CD8-positive, alpha-beta T cell (primary cell): ENCODE measurements at regions of chr2 and their contacts with region 1.

Region 1: DNA sequence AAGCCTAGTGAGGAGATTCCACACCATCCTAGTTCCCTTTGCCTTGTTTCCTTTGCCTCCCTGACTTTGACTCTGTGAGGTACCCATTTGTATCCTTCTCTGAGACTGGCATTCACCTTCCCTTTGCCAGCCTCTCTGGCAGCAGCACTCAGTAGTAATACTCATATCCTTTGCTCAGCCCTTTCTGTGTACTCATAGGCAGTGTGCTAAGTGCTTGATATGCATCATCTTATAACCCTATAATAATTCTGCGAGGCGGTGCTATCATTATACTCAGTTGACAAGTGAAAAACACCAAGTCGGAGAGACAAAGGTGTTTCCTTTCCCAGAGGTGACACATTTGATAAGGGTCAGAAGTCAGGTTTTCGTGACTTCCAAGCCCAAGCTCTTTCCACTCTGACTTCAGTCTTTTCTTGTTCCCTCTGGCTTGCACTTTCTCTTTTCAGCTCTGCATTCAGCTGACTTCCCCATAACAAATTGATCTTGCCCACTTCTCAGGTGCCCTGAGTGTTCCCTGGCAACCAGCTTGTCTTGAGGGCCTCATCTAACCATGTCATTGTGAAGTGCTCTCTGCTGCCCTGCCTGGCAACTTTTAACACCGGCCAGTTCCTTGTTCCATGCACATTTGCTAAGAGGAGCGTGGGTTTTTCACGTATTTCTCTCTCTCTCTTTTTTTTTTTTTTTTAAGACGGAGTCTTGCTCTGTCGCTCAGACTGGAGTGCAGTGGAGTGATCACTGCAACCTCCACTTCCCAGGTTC is 94.5 kb upstream of the UPP2 start:
- DNase-seq: peak in 1 of 9 experiments; percentile 24
- ATAC-seq: peak; percentile 40
- H3K4me3 ChIP-seq: no peak overlapping the region
- H3K4me3 Mint-ChIP-seq: no peak overlapping the region
- H3K27ac ChIP-seq: no peak overlapping the region
- H3K27ac Mint-ChIP-seq: no peak overlapping the region
- H3K4me1 ChIP-seq: no peaks in the 10 kb centered on the region
- H3K4me1 Mint-ChIP-seq: peaks cover 4% of the 10 kb centered on the region
- H3K27me3 ChIP-seq: no peaks in the 10 kb centered on the region
- H3K27me3 Mint-ChIP-seq: peaks cover 11% of the 10 kb centered on the region
- CTCF ChIP-seq: no peak

Region 2: GRCh38 chr2:157497638-157498314 is 509.4 kb before region 1 on chr2:
- CTCF ChIA-PET with region 1: interaction called, 8 read pairs
- POLR2A ChIA-PET with region 1: no interaction called
- intact Hi-C with region 1: loop called (anchors 1 kb)
- DNase-seq: peak in 2 of 9 experiments; percentile 49 to 62
- ATAC-seq: peak; percentile 91
- H3K4me3 ChIP-seq: no peak overlapping the region
- H3K4me3 Mint-ChIP-seq: no peak overlapping the region
- H3K27ac ChIP-seq: no peak overlapping the region
- H3K27ac Mint-ChIP-seq: no peak overlapping the region
- H3K4me1 ChIP-seq: peaks cover 7% of the 10 kb centered on the region
- H3K4me1 Mint-ChIP-seq: peaks cover 33% of the 10 kb centered on the region
- H3K27me3 ChIP-seq: no peaks in the 10 kb centered on the region
- H3K27me3 Mint-ChIP-seq: no peaks in the 10 kb centered on the region
- CTCF ChIP-seq: peak; percentile 71

Region 3: GRCh38 chr2:157509744-157510143 is 497.4 kb before region 1 on chr2:
- CTCF ChIA-PET with region 1: interaction called, 14 read pairs
- POLR2A ChIA-PET with region 1: no interaction called
- intact Hi-C with region 1: no loop called
- DNase-seq: peak in 2 of 9 experiments; percentile 7 to 13
- ATAC-seq: no peak
- H3K4me3 ChIP-seq: no peak overlapping the region
- H3K4me3 Mint-ChIP-seq: no peak overlapping the region
- H3K27ac ChIP-seq: no peak overlapping the region
- H3K27ac Mint-ChIP-seq: no peak overlapping the region
- H3K4me1 ChIP-seq: no peaks in the 10 kb centered on the region
- H3K4me1 Mint-ChIP-seq: no peaks in the 10 kb centered on the region
- H3K27me3 ChIP-seq: no peaks in the 10 kb centered on the region
- H3K27me3 Mint-ChIP-seq: peaks cover 3% of the 10 kb centered on the region
- CTCF ChIP-seq: no peak

Region 4: DNA sequence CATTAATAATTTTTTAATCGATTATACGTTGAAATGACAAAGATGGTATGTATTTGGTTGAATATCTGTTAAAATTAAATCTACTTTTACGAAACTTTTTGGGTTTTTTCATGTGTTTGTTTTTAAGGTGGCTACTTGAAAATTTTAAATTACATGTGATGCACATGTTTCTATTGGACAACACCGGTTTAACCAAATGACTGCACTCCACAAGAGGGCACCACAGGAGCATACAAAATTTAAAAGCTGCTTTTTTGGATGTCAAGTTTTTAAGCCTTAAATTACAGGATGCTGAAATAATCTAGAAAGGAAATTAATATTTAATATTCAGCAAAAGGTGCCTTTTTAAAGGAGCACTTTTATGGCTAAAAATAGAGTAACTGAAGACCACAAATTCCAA is 229.7 kb before region 1 on chr2:
- CTCF ChIA-PET with region 1: interaction called, 23 read pairs
- POLR2A ChIA-PET with region 1: no interaction called
- intact Hi-C with region 1: loop called (anchors 1 kb)
- DNase-seq: peak in 8 of 9 experiments; percentile 4 to 55 (median 40)
- ATAC-seq: no peak
- H3K4me3 ChIP-seq: no peak overlapping the region
- H3K4me3 Mint-ChIP-seq: no peak overlapping the region
- H3K27ac ChIP-seq: no peak overlapping the region
- H3K27ac Mint-ChIP-seq: no peak overlapping the region
- H3K4me1 ChIP-seq: no peaks in the 10 kb centered on the region
- H3K4me1 Mint-ChIP-seq: peaks cover 11% of the 10 kb centered on the region
- H3K27me3 ChIP-seq: no peaks in the 10 kb centered on the region
- H3K27me3 Mint-ChIP-seq: no peaks in the 10 kb centered on the region
- CTCF ChIP-seq: peak; percentile 68